CD8-positive, alpha-beta T cell (primary cell): ENCODE measurements at regions of chr1 and their contacts with region 1.

Region 1: GRCh38 chr1:161201828-161202725 is at the start of gene NDUFS2:
- DNase-seq: peak; percentile 90 to 99 (median 95)
- ATAC-seq: peak; percentile 98
- H3K4me3 ChIP-seq: peak within 1 kb of the TSS; percentile 84 to 93
- H3K4me3 Mint-ChIP-seq: peak within 1 kb of the TSS; percentile 95
- H3K27ac ChIP-seq: peak within 1 kb of the TSS; percentile 87
- H3K27ac Mint-ChIP-seq: peak within 1 kb of the TSS; percentile 98
- H3K4me1 ChIP-seq: peaks cover 58% of the 10 kb centered on the region
- H3K4me1 Mint-ChIP-seq: peaks cover 69% of the 10 kb centered on the region
- H3K27me3 ChIP-seq: no peaks in the 10 kb centered on the region
- H3K27me3 Mint-ChIP-seq: no peaks in the 10 kb centered on the region
- CTCF ChIP-seq: no peak
- total RNA-seq, gene NDUFS2: 53.0 to 63.4 TPM

Region 2: DNA sequence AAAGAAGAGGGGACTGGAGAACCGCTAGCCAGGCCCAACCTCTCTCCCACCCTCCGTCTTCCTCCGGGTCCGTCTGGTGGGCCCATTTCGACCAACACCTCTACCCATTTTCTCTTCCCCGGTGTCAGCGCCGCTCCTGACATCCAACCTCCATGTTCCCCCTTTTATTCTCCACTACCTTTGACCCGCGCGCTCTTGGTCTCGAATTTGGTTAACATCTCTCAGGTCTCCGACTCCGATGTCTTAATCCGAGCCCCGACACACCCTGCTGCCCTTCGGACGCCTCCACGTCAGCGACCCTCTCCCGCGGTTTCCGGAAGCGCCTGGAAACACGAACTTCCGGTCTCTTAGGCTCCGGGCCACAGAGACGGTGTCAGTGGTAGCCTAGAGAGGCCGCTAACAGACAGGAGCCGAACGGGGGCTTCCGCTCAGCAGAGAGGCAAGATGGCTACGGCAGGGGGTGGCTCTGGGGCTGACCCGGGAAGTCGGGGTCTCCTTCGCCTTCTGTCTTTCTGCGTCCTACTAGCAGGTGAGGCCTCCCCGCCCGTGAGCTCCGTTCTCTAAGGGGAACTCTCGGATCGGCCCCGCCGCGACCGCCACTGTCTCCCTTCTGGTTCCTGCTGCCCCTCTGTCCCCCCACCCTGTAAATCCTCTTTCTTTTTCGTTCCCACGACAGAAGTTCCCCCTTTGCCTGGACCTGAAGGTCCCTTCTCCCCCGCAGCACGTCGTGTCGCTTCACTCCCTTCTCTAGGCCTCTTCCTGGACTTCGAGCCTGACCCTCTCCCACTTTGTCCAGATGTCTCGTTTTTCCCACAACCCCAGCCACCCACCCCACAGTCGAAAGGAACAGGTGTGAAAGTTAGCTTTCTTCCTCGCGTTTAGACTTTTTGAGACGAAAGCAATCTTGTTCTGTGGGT is 858.9 kb before region 1 on chr1 and contains the starts of genes COPA and NCSTN:
- CTCF ChIA-PET with region 1: no interaction called
- POLR2A ChIA-PET with region 1: no interaction called
- intact Hi-C with region 1: loop called in 1 of 2 experiments (anchors 10 kb)
- DNase-seq: peak; percentile 82 to 97 (median 89)
- ATAC-seq: peak; percentile 98
- H3K4me3 ChIP-seq: peak within 1 kb of the TSS; percentile 78 to 98
- H3K4me3 Mint-ChIP-seq: peak within 1 kb of the TSS; percentile 100
- H3K27ac ChIP-seq: peak within 1 kb of the TSS; percentile 88 to 97
- H3K27ac Mint-ChIP-seq: peak within 1 kb of the TSS; percentile 100
- H3K4me1 ChIP-seq: peaks cover 12% of the 10 kb centered on the region
- H3K4me1 Mint-ChIP-seq: peaks cover 72% of the 10 kb centered on the region
- H3K27me3 ChIP-seq: no peaks in the 10 kb centered on the region
- H3K27me3 Mint-ChIP-seq: no peaks in the 10 kb centered on the region
- CTCF ChIP-seq: no peak
- total RNA-seq, gene COPA: 116 to 126 TPM
- total RNA-seq, gene NCSTN: 55.6 to 58.4 TPM

Region 3: DNA sequence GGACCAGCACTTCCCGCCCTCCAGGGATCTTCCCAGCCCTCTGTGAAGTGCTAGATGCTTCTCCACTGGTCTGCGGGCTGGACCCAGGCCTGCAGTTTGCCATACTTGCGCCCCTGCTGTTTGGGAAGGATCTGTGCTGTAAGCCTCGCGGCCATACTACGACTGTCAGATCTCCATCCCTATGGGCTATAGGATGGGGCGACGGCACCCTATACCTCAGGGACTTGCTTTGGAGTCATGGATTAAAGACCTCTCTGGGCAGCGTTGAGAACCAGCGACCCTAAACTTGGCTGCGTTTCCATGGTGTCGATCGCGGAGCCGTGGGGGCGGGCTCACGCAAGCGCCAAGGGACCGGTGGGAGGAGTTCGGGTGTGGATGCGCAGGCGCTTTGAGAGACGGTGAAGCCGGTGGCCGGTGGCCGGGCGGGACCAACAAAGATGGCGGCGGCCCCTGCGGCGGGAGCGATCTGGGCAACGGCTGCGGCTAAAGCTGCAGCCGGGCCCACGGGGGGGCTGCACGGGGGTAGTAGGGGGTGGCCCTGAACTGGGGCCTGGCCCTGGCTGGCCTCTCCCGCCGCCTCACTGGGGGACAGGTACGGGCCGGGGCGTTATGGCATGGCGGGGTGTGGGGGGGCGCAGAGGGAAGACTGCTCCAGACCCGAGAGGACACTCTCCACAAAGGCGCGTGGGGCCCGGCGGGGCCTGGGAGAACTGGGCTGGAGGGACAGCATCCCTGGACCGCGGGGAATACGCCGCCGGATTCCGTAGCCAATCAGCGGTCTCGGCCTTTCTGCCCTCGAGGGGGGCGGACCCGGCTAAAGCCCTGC is 42.8 kb before region 1 on chr1 and contains the start of gene USP21:
- CTCF ChIA-PET with region 1: interaction called, 3 read pairs
- POLR2A ChIA-PET with region 1: interaction called, 3 read pairs
- intact Hi-C with region 1: loop called in 1 of 2 experiments (anchors 1 kb)
- DNase-seq: peak; percentile 84 to 95 (median 93)
- ATAC-seq: peak; percentile 96
- H3K4me3 ChIP-seq: peak within 1 kb of the TSS; percentile 76 to 82
- H3K4me3 Mint-ChIP-seq: peak within 1 kb of the TSS; percentile 94
- H3K27ac ChIP-seq: peak within 1 kb of the TSS; percentile 72 to 82
- H3K27ac Mint-ChIP-seq: peak within 1 kb of the TSS; percentile 95
- H3K4me1 ChIP-seq: peaks cover 37% of the 10 kb centered on the region
- H3K4me1 Mint-ChIP-seq: peaks cover 58% of the 10 kb centered on the region
- H3K27me3 ChIP-seq: no peaks in the 10 kb centered on the region
- H3K27me3 Mint-ChIP-seq: no peaks in the 10 kb centered on the region
- CTCF ChIP-seq: no peak
- total RNA-seq, gene USP21: 34.8 to 38.1 TPM

Region 4: GRCh38 chr1:161185282-161185682 is 16.8 kb before region 1 on chr1:
- CTCF ChIA-PET with region 1: interaction called, 124 read pairs
- POLR2A ChIA-PET with region 1: interaction called, 30 read pairs
- intact Hi-C with region 1: loop called in 1 of 2 experiments (anchors 2 kb)
- DNase-seq: peak; percentile 59 to 95 (median 81)
- ATAC-seq: peak; percentile 76
- H3K4me3 ChIP-seq: peak overlapping the region; percentile 4 to 60
- H3K4me3 Mint-ChIP-seq: peak overlapping the region; percentile 87
- H3K27ac ChIP-seq: peak overlapping the region; percentile 27 to 88
- H3K27ac Mint-ChIP-seq: peak overlapping the region; percentile 95
- H3K4me1 ChIP-seq: peaks cover 83% of the 10 kb centered on the region
- H3K4me1 Mint-ChIP-seq: peaks cover 79% of the 10 kb centered on the region
- H3K27me3 ChIP-seq: no peaks in the 10 kb centered on the region
- H3K27me3 Mint-ChIP-seq: no peaks in the 10 kb centered on the region
- CTCF ChIP-seq: no peak

Region 5: GRCh38 chr1:161305867-161306519 is 103.9 kb after region 1 on chr1:
- CTCF ChIA-PET with region 1: interaction called, 4 read pairs
- POLR2A ChIA-PET with region 1: interaction called, 16 read pairs
- intact Hi-C with region 1: loop called in 1 of 2 experiments (anchors 2 kb)
- DNase-seq: peak; percentile 73 to 95 (median 89)
- ATAC-seq: peak; percentile 98
- H3K4me3 ChIP-seq: peak overlapping the region; percentile 74 to 93
- H3K4me3 Mint-ChIP-seq: peak overlapping the region; percentile 97
- H3K27ac ChIP-seq: peak overlapping the region; percentile 70 to 71
- H3K27ac Mint-ChIP-seq: peak overlapping the region; percentile 93
- H3K4me1 ChIP-seq: peaks cover 31% of the 10 kb centered on the region
- H3K4me1 Mint-ChIP-seq: peaks cover 40% of the 10 kb centered on the region
- H3K27me3 ChIP-seq: no peaks in the 10 kb centered on the region
- H3K27me3 Mint-ChIP-seq: no peaks in the 10 kb centered on the region
- CTCF ChIP-seq: peak; percentile 54

Region 6: DNA sequence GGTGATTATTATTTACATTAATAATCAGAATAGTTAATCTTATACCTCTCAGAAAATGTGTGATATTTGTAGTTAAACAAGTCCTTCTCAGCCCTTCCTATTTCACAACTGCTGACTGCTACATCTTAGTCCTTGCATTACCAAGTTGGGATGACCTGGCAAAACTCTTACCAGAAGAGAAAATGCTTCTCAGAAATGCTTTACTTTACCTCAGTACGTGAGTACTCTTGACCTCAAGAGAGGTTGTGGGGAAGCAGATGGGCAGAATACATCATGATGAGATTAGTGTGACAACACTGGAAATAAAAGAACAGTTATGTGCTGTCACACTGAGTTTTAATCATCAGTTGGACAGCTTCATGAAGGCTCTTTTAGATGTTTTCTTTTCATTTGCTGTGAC is 149.4 kb after region 1 on chr1:
- CTCF ChIA-PET with region 1: no interaction called
- POLR2A ChIA-PET with region 1: no interaction called
- intact Hi-C with region 1: no loop called
- DNase-seq: no peak
- ATAC-seq: no peak
- H3K4me3 ChIP-seq: no peak overlapping the region
- H3K4me3 Mint-ChIP-seq: no peak overlapping the region
- H3K27ac ChIP-seq: no peak overlapping the region
- H3K27ac Mint-ChIP-seq: no peak overlapping the region
- H3K4me1 ChIP-seq: no peaks in the 10 kb centered on the region
- H3K4me1 Mint-ChIP-seq: peaks cover 15% of the 10 kb centered on the region
- H3K27me3 ChIP-seq: no peaks in the 10 kb centered on the region
- H3K27me3 Mint-ChIP-seq: no peaks in the 10 kb centered on the region
- CTCF ChIP-seq: no peak